Endothelial cell of umbilical vein (primary cell): ENCODE measurements at regions of chr7 and their contacts with region 1.

Region 1: DNA sequence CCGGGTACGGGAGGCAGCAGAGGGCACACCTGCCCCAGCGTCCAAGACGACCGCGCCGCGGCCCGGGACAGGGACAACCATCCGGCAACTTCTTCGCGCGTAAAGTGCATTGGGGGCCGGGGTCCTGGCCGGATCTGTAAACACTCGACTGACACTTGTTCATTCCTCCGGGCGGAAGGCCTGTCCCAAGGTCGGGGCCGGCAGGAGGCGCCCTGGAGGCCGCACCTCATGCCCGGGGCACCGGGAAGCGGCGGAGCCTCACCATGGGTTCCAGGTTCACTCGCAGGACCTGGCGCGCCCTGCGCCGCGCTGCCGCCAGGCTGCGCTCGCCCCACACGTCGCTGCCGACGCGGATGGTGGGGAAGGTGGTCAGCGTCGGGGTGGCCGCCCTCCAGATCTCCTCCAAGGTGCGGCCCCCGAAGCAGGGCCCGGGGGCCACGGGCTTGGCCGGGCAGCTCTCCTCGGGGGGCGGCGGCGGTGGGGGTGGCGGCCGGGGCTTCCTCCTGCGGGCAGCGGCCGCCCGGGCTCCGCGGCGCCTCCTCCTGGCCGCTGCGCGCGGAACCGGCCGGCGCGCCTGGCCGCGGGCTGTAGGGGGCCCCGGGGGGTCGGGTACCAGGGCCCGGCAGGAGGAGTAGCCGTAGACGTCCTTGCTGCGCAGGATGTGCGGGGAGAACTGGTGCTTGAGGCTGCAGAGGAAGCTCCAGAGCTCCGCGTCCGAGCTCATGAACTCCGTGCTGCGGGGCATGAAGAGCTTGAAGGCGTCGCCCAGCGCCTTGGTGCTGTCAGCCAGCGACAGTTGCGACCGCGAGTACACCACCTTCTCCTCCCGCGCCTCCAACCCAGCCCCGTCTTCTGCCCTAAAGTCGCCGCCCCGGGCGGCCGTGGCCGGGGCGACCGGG is 746 bp downstream of the CCDC71L start:
- DNase-seq: peak; percentile 87
- H3K4me3 ChIP-seq: peak overlapping the region; percentile 50 to 100 (median 98)
- H3K27ac ChIP-seq: peak overlapping the region; percentile 90
- H3K4me1 ChIP-seq: peaks cover 22% of the 10 kb centered on the region
- H3K27me3 ChIP-seq: no peaks in the 10 kb centered on the region
- CTCF ChIP-seq: peak; percentile 86 to 89
- POLR2A ChIP-seq: peak; percentile 68

Region 2: DNA sequence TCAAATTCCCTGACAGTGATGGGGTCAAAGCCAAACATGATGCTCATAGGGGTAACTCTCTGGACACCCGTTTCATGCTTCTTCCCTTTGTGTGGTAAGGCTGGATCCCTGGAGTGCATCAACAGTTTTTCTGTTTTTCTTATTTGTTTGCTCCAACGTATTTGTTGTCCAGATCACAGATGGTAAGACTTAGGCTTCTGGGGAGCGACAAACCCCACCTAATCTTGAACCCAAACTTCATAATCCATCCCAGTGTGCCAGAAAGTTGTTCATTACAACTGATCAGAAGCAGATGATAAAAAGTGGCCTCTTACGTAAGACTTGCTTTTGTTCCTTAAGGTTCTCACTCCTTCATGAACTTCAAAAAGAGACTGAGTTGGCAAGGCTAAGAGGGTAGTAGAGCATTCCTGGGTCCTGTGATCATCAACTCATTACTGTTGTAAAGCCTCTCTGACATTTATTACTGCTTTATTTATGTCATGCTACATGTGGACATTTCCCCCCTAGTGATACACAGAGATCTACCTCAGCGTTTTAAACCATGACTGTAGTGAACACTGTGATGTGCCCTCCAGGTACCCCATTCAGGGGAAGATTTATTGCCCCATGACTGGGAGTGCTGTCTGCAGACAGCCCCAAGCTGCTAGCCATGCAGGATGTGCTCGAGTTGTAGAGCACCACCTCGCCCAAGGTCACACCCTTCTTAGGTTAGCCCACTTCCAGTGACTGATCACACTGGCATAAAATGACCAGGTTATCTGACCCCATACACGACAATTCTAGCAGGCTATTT is 124.8 kb before region 1 on chr7:
- CTCF ChIA-PET with region 1: interaction called, 39 read pairs
- POLR2A ChIA-PET with region 1: interaction called, 4 read pairs
- dilution Hi-C with region 1: no loop called
- intact Hi-C with region 1: no loop called
- DNase-seq: no peak
- H3K4me3 ChIP-seq: no peak overlapping the region
- H3K27ac ChIP-seq: no peak overlapping the region
- H3K4me1 ChIP-seq: peaks cover 34% of the 10 kb centered on the region
- H3K27me3 ChIP-seq: no peaks in the 10 kb centered on the region
- CTCF ChIP-seq: no peak
- POLR2A ChIP-seq: no peak

Region 3: DNA sequence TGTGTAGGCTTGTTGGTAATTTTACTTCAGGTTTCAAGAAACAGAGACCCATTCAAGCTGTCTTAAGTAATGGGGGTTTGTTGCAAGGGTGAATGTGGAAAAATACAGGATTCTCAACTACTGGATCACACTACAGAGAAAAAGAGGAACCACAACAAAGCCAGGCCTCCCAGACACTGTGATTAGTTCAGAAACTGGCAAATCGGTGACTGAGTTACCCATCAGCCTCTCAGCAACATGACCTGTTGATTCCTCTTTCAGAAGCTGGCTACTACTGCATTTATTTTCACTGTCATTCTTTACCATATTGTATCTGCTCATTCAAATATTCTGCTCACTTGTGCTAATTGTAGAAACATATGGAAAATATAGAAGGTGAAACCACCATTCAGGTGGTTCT is 15.2 kb before region 1 on chr7:
- CTCF ChIA-PET with region 1: interaction called, 13 read pairs
- POLR2A ChIA-PET with region 1: interaction called, 4 read pairs
- dilution Hi-C with region 1: no loop called
- intact Hi-C with region 1: no loop called
- DNase-seq: no peak
- H3K4me3 ChIP-seq: no peak overlapping the region
- H3K27ac ChIP-seq: no peak overlapping the region
- H3K4me1 ChIP-seq: peaks cover 12% of the 10 kb centered on the region
- H3K27me3 ChIP-seq: no peaks in the 10 kb centered on the region
- CTCF ChIP-seq: no peak
- POLR2A ChIP-seq: no peak

Region 4: GRCh38 chr7:106731187-106731586 is 71.0 kb after region 1 on chr7:
- CTCF ChIA-PET with region 1: interaction called, 158 read pairs
- POLR2A ChIA-PET with region 1: interaction called, 8 read pairs
- dilution Hi-C with region 1: no loop called
- intact Hi-C with region 1: loop called (anchors 1 kb)
- DNase-seq: peak; percentile 96
- H3K4me3 ChIP-seq: peak overlapping the region in 1 of 3 experiments; percentile 0
- H3K27ac ChIP-seq: peak overlapping the region; percentile 44
- H3K4me1 ChIP-seq: peaks cover 27% of the 10 kb centered on the region
- H3K27me3 ChIP-seq: no peaks in the 10 kb centered on the region
- CTCF ChIP-seq: no peak
- POLR2A ChIP-seq: no peak

Region 5: GRCh38 chr7:106793015-106793975 is 133.1 kb after region 1 on chr7:
- CTCF ChIA-PET with region 1: no interaction called
- POLR2A ChIA-PET with region 1: no interaction called
- dilution Hi-C with region 1: no loop called
- intact Hi-C with region 1: loop called (anchors 5 kb)
- DNase-seq: no peak
- H3K4me3 ChIP-seq: no peak overlapping the region
- H3K27ac ChIP-seq: no peak overlapping the region
- H3K4me1 ChIP-seq: no peaks in the 10 kb centered on the region
- H3K27me3 ChIP-seq: no peaks in the 10 kb centered on the region
- CTCF ChIP-seq: peak; percentile 24 to 36
- POLR2A ChIP-seq: no peak

Region 6: GRCh38 chr7:107150375-107151073 is 490.3 kb after region 1 on chr7:
- CTCF ChIA-PET with region 1: interaction called, 4 read pairs
- POLR2A ChIA-PET with region 1: no interaction called
- dilution Hi-C with region 1: no loop called
- intact Hi-C with region 1: loop called (anchors 1 kb)
- DNase-seq: peak; percentile 89
- H3K4me3 ChIP-seq: no peak overlapping the region
- H3K27ac ChIP-seq: peak overlapping the region; percentile 20
- H3K4me1 ChIP-seq: peaks cover 13% of the 10 kb centered on the region
- H3K27me3 ChIP-seq: no peaks in the 10 kb centered on the region
- CTCF ChIP-seq: peak; percentile 28 to 35
- POLR2A ChIP-seq: no peak